Activated T-helper 1 cell treated with anti-CD3 and anti-CD28 coated beads, Interleukin-12 subunit alpha, Interleukin-12 subunit beta, Interleukin-2, Interleukin-4 antibody, amounts not matched to agents 30 ng/mL and 10 ng/mL and 1 ng/mL, durations not matched to agents 14 hours and 24 hours and 36 hours (primary cell): ENCODE measurements at regions of chr11 and their contacts with region 1.

Region 1: DNA sequence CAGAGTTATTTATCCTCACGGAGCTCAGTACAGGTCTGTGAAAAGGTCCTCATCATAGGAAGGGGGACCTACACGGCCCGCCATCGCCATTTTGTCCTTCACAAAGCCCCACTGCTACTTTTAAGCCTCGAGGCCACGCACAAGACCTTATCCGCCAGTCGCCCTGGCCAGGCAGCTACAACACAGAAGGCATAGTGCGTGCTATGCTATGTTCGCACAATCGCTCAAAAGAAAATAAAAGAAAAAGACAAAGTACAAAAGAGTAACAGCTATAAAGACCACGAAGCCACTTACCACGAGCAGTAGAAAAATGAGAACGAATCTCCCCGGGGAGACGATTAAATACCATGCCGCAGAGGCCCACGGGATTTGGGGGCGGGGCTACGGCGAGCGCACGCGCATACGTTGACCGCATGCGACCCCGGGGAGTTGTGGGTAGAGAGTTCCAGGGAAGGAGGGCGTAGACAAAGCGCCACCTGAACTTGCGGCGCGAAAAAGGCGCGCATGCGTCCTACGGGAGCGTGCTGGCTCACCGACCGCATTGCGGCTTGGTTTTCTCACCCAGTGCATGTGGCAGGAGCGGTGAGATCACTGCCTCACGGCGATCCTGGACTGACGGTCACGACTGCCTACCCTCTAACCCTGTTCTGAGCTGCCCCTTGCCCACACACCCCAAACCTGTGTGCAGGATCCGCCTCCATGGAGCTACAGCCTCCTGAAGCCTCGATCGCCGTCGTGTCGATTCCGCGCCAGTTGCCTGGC is 16.4 kb upstream of the WDR74 start:
- DNase-seq: peak; percentile 99
- H3K4me3 Mint-ChIP-seq: peak overlapping the region; percentile 98
- H3K27ac Mint-ChIP-seq: peak overlapping the region; percentile 98
- H3K4me1 Mint-ChIP-seq: peaks cover 71% of the 10 kb centered on the region
- H3K27me3 Mint-ChIP-seq: peaks cover 5% of the 10 kb centered on the region

Region 2: GRCh38 chr11:62573592-62574362 is 282.0 kb before region 1 on chr11 and contains the start of gene EEF1G:
- intact Hi-C with region 1: loop called (anchors 1 kb)
- DNase-seq: peak; percentile 99
- H3K4me3 Mint-ChIP-seq: peak within 1 kb of the TSS; percentile 98
- H3K27ac Mint-ChIP-seq: peak within 1 kb of the TSS; percentile 92
- H3K4me1 Mint-ChIP-seq: peaks cover 37% of the 10 kb centered on the region
- H3K27me3 Mint-ChIP-seq: no peaks in the 10 kb centered on the region
- total RNA-seq, gene EEF1G: 1,154 and 1,169 TPM in 2 replicates

Region 3: GRCh38 chr11:62787005-62787759 is 68.6 kb before region 1 on chr11 and contains the start of gene TMEM179B:
- intact Hi-C with region 1: loop called (anchors 1 kb)
- DNase-seq: peak; percentile 96
- H3K4me3 Mint-ChIP-seq: peak within 1 kb of the TSS; percentile 95
- H3K27ac Mint-ChIP-seq: peak within 1 kb of the TSS; percentile 94
- H3K4me1 Mint-ChIP-seq: peaks cover 42% of the 10 kb centered on the region
- H3K27me3 Mint-ChIP-seq: no peaks in the 10 kb centered on the region
- total RNA-seq, gene TMEM179B: 40.6 and 43.0 TPM in 2 replicates

Region 4: GRCh38 chr11:62805076-62805892 is 50.5 kb before region 1 on chr11 and contains the start of gene NXF1:
- intact Hi-C with region 1: loop called (anchors 1 kb)
- DNase-seq: peak; percentile 95
- H3K4me3 Mint-ChIP-seq: peak within 1 kb of the TSS; percentile 100
- H3K27ac Mint-ChIP-seq: peak within 1 kb of the TSS; percentile 99
- H3K4me1 Mint-ChIP-seq: peaks cover 40% of the 10 kb centered on the region
- H3K27me3 Mint-ChIP-seq: peaks cover 2% of the 10 kb centered on the region
- total RNA-seq, gene NXF1: 155 and 158 TPM in 2 replicates

Region 5: DNA sequence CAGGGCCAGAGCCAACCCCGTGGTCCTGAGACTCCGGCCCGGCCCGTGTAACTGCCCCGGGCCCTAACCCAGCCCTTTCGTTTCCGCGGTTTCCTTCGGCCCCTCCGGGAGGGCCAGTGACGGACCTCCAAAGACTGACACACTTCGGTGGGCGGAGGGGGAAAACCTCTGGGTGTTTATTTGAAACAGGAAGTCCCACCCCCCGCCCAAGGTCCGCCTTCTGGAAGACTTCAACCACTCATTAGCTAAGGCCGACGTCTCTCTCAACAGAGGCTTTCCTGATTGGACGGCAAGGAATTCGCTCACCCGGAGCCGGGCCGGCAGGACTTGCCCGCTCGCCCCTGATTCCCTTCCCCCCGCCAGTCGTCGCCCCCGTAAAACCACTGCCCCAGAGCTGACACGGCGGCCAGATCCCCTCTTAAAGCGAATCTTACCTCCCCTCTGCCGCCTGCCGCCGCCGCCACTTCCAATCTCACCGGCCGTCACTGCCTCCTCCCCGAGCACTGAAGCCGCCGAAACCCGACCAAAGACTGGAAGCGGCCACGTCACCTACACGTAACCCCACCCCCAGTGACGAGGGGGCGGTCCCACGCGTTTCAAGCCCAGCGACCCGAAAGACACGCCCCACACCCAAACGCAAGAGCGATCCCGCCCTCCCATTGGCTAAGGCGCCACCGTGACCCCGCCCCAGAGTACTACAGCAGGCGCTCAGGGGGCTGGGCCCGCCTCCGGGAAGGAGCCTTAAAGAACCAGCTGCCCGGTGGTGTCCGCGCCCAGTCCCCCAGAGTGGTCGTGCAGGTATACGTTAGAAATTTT is 24.0 kb before region 1 on chr11 and contains the start of gene STX5:
- intact Hi-C with region 1: loop called (anchors 1 kb)
- DNase-seq: peak; percentile 99
- H3K4me3 Mint-ChIP-seq: peak within 1 kb of the TSS; percentile 93
- H3K27ac Mint-ChIP-seq: peak within 1 kb of the TSS; percentile 99
- H3K4me1 Mint-ChIP-seq: peaks cover 41% of the 10 kb centered on the region
- H3K27me3 Mint-ChIP-seq: no peaks in the 10 kb centered on the region
- total RNA-seq, gene STX5: 34.2 and 39.9 TPM in 2 replicates